Activated CD4-positive, alpha-beta T cell treated with anti-CD3 and anti-CD28 coated beads for 36 hours (primary cell): ENCODE measurements at regions of chr21 and their contacts with region 1.

Region 1: GRCh38 chr21:44510508-44511210 is 29.3 kb downstream of the KRTAP10-1 start:
- DNase-seq: peak; percentile 89
- ATAC-seq: peak; percentile 94
- H3K4me3 Mint-ChIP-seq: no peak overlapping the region
- H3K27ac Mint-ChIP-seq: no peak overlapping the region
- H3K4me1 Mint-ChIP-seq: no peaks in the 10 kb centered on the region
- H3K27me3 Mint-ChIP-seq: no peaks in the 10 kb centered on the region

Region 2: DNA sequence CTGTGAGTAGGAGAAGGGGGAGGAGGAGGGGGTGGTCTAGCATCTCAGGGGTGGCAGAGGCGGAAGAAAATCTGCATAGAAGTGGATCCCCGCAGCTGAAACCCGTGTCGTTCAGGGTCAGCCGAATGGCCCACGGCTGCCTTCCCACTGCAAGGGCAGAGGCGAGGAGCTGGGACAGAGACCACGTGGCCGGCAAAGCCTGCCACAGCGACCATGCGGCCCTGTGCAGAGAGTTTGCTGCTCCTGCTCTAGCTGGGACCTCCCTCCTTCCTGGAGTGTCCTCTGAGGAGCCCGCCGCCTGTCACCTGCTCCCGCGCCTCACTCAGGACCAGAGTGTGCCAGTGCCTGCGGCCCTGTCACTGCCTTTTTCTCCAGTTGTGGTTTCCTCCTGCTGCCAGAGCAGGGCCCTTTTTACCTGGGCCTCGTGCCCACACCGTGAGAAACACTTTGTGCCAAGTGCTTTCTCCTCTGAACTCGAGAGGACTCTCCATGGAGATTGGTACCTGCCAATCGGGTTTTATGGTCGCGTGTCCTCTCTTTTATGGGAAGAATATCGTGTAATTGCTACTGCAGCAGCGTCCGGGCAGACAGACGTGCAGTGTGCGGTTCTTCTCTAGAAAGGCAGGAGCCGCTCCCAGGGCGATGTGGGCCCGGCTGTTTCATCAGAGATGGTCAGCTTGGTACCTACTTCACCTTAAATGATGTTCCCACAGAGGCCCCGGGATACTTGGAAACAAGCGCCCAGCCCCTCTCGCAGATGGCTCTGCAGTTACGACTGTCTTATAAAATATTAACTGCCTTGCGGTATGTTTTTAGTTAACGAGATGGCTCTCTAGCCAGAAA is 162.5 kb before region 1 on chr21:
- CTCF ChIA-PET with region 1: no interaction called
- POLR2A ChIA-PET with region 1: no interaction called
- intact Hi-C with region 1: no loop called
- DNase-seq: no peak
- ATAC-seq: no peak
- H3K4me3 Mint-ChIP-seq: no peak overlapping the region
- H3K27ac Mint-ChIP-seq: no peak overlapping the region
- H3K4me1 Mint-ChIP-seq: peaks cover 10% of the 10 kb centered on the region
- H3K27me3 Mint-ChIP-seq: peaks cover 8% of the 10 kb centered on the region

Region 3: DNA sequence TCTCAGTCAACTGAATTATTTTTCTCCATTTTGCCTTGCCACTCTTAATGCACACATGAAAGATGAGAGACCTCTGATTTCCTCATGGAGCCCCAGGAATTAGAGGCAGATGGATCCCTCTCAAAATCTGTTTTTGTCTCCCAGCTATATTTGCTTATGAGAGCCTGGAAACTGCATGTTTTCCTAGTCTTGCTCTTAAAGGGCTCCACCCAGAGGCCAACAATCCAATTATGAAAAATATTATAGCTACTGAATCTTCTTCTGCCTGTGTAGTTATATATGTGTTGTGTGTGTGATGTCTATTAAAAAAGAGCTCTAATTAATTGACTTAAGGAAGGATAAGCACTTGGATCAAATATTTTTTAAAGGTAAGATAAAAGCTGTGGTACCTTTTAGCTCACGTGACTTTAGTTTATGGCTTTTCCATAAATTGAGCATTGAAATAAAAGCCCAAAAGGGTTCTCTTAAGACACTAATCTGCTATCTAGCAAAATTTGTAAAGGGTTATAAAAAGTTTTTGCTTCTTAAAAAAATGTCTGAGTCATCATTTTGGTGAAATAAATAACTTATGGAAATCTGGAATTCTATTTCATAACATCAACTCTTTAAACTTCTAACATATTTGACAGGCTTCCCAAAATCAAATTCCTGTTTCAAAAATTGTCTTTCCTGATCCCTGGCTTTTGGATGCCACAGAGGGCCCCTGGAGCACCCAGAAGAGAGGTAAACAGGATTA is 231.9 kb after region 1 on chr21:
- CTCF ChIA-PET with region 1: interaction called, 9 read pairs
- POLR2A ChIA-PET with region 1: no interaction called
- intact Hi-C with region 1: loop called (anchors 1 kb)
- DNase-seq: no peak
- ATAC-seq: no peak
- H3K4me3 Mint-ChIP-seq: no peak overlapping the region
- H3K27ac Mint-ChIP-seq: no peak overlapping the region
- H3K4me1 Mint-ChIP-seq: no peaks in the 10 kb centered on the region
- H3K27me3 Mint-ChIP-seq: no peaks in the 10 kb centered on the region

Region 4: DNA sequence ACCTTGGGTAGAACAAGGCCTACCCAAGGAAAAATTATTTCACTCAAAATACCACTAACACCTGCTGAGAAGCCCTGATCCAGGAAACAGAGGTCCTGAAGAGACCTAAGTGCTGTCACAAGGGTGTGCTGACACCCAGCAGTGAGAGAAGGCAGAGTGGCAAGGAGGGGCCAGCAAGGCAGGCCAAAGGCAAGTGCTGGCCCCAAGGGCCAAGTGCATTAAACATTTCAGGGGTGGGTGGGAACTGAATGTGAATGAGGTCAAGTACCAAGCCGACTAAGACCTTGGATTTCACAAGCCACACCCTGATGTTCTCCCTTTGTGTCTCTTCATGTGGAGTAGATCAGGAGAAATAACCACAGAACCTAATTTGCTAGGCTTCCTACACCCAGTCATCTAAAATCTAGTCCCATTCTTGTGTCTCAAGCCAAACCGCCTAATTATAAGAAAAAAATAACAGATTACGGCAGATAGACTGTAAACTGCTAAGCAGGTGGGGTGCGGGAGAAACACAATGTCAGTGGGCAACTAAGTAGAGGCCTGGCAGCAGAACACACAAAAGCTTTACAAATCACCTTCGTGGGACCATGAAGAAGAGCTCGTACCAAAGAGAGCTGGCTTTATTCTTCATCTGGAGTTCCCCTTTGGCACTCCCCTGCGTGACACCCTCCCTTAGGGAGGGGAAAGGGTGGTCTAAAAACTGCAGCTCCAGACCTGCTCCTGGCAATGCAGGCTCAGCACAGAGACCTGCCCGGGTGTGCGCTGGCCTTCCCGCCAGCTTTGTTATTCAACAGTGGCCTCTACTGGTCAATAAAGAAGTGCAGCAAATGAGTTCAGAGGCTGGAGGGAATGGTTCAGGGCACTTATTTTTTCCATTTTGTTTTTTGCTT is 282.3 kb after region 1 on chr21:
- CTCF ChIA-PET with region 1: interaction called, 26 read pairs
- POLR2A ChIA-PET with region 1: no interaction called
- intact Hi-C with region 1: loop called (anchors 1 kb)
- DNase-seq: peak; percentile 71
- ATAC-seq: peak; percentile 92
- H3K4me3 Mint-ChIP-seq: no peak overlapping the region
- H3K27ac Mint-ChIP-seq: peak overlapping the region; percentile 53
- H3K4me1 Mint-ChIP-seq: peaks cover 67% of the 10 kb centered on the region
- H3K27me3 Mint-ChIP-seq: no peaks in the 10 kb centered on the region

Region 5: DNA sequence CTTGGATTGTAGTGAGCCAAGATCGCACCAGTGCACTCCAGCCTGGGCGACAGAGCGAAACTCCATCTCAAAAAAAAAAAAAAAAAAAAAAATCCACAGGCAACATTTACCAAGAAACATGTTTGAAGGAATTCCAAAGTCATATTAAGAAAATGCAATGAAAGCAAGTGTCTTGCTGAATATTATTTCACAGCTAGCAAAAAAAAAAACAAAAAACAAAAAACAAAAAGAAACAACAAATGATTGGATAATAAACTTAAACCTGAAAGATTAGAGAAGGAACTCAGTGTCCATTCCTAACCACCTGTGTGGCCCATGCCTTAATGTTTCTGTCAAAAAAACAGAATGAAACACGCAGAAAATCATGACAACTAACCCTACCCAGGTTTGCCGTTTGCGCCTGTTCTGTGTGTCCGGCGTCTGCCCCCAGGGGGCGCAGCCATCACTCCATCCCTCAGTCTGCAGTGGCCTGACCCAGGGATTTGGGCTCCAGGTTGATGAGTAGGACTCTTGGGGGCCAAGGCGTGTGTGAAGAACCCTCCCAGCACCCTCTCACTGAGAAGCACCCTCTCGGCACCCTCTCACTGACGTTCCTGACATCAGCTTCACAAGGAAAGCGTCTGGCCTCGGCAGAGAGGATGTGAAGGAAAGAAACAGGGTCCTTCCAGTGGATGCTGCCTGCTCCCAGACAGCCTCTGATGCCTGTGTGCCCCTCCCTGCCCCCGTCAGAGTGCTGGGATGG is 382.0 kb after region 1 on chr21:
- CTCF ChIA-PET with region 1: no interaction called
- POLR2A ChIA-PET with region 1: no interaction called
- intact Hi-C with region 1: loop called in 1 of 2 experiments (anchors 5 kb)
- DNase-seq: peak; percentile 87
- ATAC-seq: peak; percentile 85
- H3K4me3 Mint-ChIP-seq: no peak overlapping the region
- H3K27ac Mint-ChIP-seq: no peak overlapping the region
- H3K4me1 Mint-ChIP-seq: peaks cover 5% of the 10 kb centered on the region
- H3K27me3 Mint-ChIP-seq: no peaks in the 10 kb centered on the region